Naive thymus-derived CD4-positive, alpha-beta T cell (primary cell): ENCODE measurements at regions of chr7 and their contacts with region 1.

Region 1: DNA sequence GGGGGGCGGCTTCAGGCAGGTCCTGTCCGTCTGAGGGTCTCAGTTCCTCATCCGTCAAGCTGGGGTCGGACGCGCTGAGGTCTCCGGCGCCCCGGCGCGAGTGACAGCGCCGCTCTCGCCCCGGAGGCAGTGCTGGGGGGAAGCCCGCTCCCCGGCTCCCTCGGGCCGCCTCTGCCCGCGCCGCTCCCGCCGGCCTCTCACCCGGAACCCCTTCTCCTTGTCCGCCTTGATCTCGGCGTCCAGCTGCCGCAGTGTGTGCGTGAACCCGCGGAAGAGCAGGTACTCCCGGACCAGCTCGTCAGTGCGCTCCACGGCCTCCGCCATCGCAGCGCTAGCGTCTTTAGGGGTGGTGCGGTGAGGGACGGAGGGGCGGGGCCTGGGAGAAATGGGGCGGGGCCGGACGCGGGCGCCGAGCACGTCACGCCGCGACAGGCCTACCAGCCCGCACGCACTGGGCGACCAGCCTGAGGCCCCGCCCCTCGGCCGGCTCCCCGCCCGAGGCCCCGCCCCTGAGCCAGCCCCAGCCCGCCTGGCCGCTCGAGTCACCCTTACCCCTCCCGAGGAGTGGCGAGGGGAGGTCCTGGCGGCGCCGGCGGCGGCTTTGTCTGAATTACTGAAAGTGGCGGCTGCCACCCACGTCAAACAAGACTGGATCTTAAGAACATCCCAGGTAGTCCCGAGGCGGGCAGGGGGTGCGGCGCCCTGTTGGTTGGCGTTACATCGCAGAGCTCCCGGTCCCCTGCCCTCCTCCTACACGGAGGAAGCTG is at the start of gene WDR91:
- DNase-seq: peak; percentile 83 to 94 (median 90)
- ATAC-seq: peak; percentile 97
- H3K4me3 ChIP-seq: peak within 1 kb of the TSS; percentile 68
- H3K4me3 Mint-ChIP-seq: peak within 1 kb of the TSS; percentile 91 to 99 (median 96)
- H3K27ac ChIP-seq: peak within 1 kb of the TSS; percentile 92
- H3K27ac Mint-ChIP-seq: peak within 1 kb of the TSS; percentile 94 to 99 (median 98)
- H3K4me1 ChIP-seq: peaks cover 0 to 5% of the 10 kb centered on the region in 2 donors
- H3K4me1 Mint-ChIP-seq: peaks cover 18 to 47% (median 37%) of the 10 kb centered on the region in 7 donors
- H3K27me3 ChIP-seq: no peaks in the 10 kb centered on the region
- H3K27me3 Mint-ChIP-seq: peaks cover 0 to 2% (median 0%) of the 10 kb centered on the region in 5 donors
- total RNA-seq, gene WDR91: 18.2 to 59.2 (median 37.0) TPM

Region 2: DNA sequence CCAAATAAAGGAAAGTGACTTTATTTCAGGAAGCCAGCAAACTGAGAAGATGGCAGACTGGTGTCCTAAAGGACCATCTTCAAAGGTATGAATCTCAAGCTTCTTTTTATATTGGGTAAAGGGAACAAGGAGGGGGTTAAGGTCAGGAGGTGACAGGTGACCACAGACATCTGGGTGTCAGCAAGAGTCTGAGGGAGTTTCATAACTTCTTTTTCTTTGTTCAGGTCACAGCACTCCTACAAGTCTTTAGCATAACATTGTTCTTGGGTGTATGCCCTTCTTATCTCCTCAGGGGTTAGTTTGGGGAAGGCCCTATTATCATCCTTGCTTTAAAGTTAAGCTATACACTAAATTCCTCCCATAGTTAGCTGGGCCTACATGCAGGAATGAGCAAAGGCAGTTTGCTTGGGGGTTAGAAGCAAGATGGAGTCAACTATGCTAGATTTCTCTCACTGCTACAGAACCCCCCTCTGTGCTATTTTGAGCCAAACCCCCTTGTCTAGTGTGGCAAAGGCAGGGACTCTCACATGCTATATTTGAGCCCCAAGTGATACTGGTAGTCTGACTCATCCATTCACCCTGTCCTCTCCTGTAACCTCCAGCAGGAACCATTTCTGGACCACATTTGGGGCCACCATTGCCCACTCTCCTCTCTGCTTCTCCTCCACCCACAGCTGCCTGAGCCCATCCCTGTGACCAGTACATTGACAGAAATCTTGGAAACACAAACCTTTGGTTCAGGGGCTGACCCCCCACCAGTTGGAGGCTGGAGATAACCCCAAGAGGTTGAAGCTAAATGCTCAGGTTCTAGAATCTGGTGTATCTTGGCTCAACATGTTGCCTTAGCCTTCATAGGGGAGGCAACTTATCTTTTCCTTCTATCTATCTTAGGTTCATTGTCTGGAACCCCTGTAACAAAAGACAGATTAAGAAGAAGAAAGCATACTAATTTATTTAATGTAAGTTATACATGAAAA is 1139.7 kb before region 1 on chr7:
- CTCF ChIA-PET with region 1: no interaction called
- POLR2A ChIA-PET with region 1: no interaction called
- intact Hi-C with region 1: no loop called
- DNase-seq: no peak
- ATAC-seq: no peak
- H3K4me3 ChIP-seq: no peak overlapping the region
- H3K4me3 Mint-ChIP-seq: no peak overlapping the region
- H3K27ac ChIP-seq: no peak overlapping the region
- H3K27ac Mint-ChIP-seq: no peak overlapping the region
- H3K4me1 ChIP-seq: no peaks in the 10 kb centered on the region
- H3K4me1 Mint-ChIP-seq: no peaks in the 10 kb centered on the region
- H3K27me3 ChIP-seq: no peaks in the 10 kb centered on the region
- H3K27me3 Mint-ChIP-seq: no peaks in the 10 kb centered on the region

Region 3: GRCh38 chr7:134316539-134317344 is 894.6 kb before region 1 on chr7 and contains the start of gene SLC35B4:
- CTCF ChIA-PET with region 1: no interaction called
- POLR2A ChIA-PET with region 1: no interaction called
- intact Hi-C with region 1: loop called (anchors 2 to 5 kb)
- DNase-seq: peak; percentile 79 to 95 (median 92)
- ATAC-seq: peak; percentile 99
- H3K4me3 ChIP-seq: peak within 1 kb of the TSS; percentile 79
- H3K4me3 Mint-ChIP-seq: peak within 1 kb of the TSS; percentile 88 to 97 (median 94)
- H3K27ac ChIP-seq: peak within 1 kb of the TSS; percentile 77
- H3K27ac Mint-ChIP-seq: peak within 1 kb of the TSS; percentile 81 to 93 (median 89)
- H3K4me1 ChIP-seq: peaks cover 0 to 15% of the 10 kb centered on the region in 2 donors
- H3K4me1 Mint-ChIP-seq: peaks cover 18 to 29% (median 26%) of the 10 kb centered on the region in 7 donors
- H3K27me3 ChIP-seq: no peaks in the 10 kb centered on the region
- H3K27me3 Mint-ChIP-seq: peaks cover 0 to 4% (median 0%) of the 10 kb centered on the region in 5 donors
- total RNA-seq, gene SLC35B4: 9.8 to 19.2 (median 12.2) TPM

Region 4: DNA sequence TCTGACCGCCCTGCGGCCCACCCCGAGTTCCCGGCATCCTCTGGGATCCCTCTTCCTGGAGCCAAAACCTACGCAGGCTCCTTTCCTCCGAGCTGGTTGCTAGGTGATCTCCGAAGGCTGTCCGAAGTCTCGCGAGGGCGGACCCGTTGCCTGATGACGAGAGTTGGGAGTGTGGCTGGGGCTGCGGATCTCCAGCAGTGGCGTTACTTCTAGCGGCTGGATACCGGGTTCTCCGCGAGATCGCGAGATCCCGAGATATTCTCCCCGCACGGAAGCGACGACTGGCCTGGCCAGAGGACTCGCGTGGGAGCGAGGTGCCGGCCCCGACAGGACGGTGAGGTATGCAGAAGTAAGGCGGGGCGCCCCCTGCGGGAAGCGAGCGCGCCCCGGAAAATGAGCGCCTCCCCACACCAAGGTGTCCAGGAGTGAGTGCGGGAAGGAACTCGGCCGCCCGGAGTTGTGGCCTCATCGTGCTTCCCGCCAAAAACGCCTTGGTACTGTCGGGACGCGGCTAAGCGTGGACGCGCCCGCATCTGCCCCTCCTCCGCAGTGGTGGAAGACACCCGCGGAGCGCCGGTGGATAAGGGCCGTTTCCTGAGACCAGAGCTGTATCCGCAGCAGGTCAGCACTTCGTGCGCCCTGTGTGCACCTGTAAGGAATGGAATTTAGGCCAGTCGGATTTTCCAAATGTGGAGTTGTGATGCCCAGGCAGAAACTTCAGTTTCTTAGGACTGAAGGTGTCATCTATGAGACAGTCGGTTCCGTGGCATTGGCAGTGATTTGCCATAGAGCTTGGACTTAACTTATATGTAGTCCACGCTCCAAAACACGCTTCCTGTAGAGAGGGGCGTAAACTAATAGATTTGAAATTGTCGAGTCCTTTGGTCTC is 224.8 kb before region 1 on chr7 and contains the start of gene AGBL3:
- CTCF ChIA-PET with region 1: no interaction called
- POLR2A ChIA-PET with region 1: interaction called, 15 read pairs
- intact Hi-C with region 1: loop called (anchors 1 kb)
- DNase-seq: peak; percentile 80 to 92 (median 89)
- ATAC-seq: peak; percentile 94
- H3K4me3 ChIP-seq: peak within 1 kb of the TSS; percentile 92
- H3K4me3 Mint-ChIP-seq: peak within 1 kb of the TSS; percentile 93 to 100 (median 98)
- H3K27ac ChIP-seq: peak within 1 kb of the TSS; percentile 96
- H3K27ac Mint-ChIP-seq: peak within 1 kb of the TSS; percentile 97 to 100 (median 99)
- H3K4me1 ChIP-seq: no peaks in the 10 kb centered on the region
- H3K4me1 Mint-ChIP-seq: peaks cover 20 to 61% (median 52%) of the 10 kb centered on the region in 7 donors
- H3K27me3 ChIP-seq: no peaks in the 10 kb centered on the region
- H3K27me3 Mint-ChIP-seq: no peaks in the 10 kb centered on the region
- total RNA-seq, gene AGBL3: 2.1 to 6.6 (median 3.8) TPM

Region 5: DNA sequence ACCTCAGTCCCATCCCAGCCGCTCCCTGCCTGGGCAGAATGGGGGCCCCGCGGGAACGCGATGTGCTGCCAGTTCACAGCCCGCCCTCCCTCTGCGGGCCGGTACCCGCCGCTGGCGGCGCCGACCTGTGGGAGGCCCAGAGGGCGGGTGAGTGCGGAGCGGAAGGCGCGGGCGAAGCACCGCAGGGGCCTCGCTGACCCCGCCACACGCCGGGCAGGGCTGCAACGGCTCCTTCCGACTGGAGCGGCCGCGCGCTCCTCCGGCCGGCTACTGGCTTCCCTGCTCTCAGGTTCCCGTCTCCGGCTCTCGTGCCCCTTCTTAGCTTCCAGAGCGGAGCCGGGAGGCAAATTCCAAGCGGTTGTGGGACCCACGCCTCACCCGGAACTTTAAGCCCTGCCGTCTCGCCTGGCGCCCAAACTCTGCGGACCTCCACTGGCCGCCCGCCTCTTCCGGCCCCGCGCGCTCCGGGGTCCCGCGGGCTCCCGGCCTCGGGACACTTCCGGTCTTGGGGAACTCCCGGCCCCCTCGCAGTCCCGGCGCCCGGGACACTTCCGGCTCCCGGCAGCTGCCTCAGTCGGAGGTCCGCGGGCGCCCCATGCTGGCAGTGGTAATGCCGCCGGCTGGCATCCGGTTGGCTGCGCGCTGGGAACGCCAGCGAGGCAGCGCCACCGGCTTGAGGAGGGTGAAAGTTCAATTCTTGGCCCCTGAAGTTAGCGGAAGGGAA is 40.9 kb before region 1 on chr7 and contains the start of gene CYREN:
- CTCF ChIA-PET with region 1: no interaction called
- POLR2A ChIA-PET with region 1: interaction called, 12 read pairs
- intact Hi-C with region 1: loop called (anchors 1 kb)
- DNase-seq: peak; percentile 74 to 91 (median 82)
- ATAC-seq: peak; percentile 85
- H3K4me3 ChIP-seq: peak within 1 kb of the TSS; percentile 84
- H3K4me3 Mint-ChIP-seq: peak within 1 kb of the TSS; percentile 84 to 96 (median 90)
- H3K27ac ChIP-seq: peak within 1 kb of the TSS; percentile 95
- H3K27ac Mint-ChIP-seq: peak within 1 kb of the TSS; percentile 94 to 98 (median 95)
- H3K4me1 ChIP-seq: peaks cover 16 to 29% of the 10 kb centered on the region in 2 donors
- H3K4me1 Mint-ChIP-seq: peaks cover 31 to 59% (median 47%) of the 10 kb centered on the region in 7 donors
- H3K27me3 ChIP-seq: no peaks in the 10 kb centered on the region
- H3K27me3 Mint-ChIP-seq: no peaks in the 10 kb centered on the region
- total RNA-seq, gene CYREN: 25.6 to 50.7 (median 32.0) TPM

Region 6: DNA sequence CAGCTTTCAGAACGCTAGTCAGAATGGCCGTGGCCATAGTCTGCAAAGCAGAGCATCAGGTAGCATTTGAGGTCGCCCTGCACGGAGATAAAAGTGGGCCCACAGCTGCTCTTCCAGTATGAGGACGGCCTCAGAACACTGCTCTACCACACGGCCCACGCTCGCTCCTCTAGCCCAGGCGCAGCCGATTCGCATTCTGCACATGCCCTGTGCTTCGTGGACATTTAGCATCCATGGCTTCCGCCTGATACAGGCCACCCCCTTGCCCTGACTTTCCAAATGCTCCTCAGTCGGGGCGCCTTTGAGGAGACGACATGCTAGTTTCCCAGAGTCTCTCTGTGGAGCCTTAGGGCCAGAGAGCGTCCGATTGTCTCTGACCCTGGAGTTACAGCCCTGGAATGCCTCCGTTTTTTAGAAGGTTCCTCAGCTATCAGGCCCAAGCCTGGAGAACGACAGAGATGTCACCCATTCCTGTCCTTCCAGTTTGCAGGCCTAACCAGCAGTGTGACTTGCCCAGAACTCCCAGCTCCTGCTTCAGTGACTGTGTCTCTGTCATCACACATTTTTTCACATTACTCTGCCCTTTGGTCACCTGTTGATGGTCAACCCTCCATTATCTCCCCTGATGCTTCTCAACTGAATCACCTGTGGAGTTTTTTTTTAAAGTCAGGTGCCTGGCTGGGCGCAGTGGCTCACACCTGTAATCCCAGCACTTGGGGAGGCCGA is 36.5 kb after region 1 on chr7:
- CTCF ChIA-PET with region 1: no interaction called
- POLR2A ChIA-PET with region 1: no interaction called
- intact Hi-C with region 1: no loop called
- DNase-seq: no peak
- ATAC-seq: no peak
- H3K4me3 ChIP-seq: no peak overlapping the region
- H3K4me3 Mint-ChIP-seq: no peak overlapping the region
- H3K27ac ChIP-seq: no peak overlapping the region
- H3K27ac Mint-ChIP-seq: no peak overlapping the region
- H3K4me1 ChIP-seq: no peaks in the 10 kb centered on the region
- H3K4me1 Mint-ChIP-seq: peaks cover 0 to 5% (median 4%) of the 10 kb centered on the region in 7 donors
- H3K27me3 ChIP-seq: no peaks in the 10 kb centered on the region
- H3K27me3 Mint-ChIP-seq: peaks cover 0 to 9% (median 0%) of the 10 kb centered on the region in 5 donors

Region 7: GRCh38 chr7:135260930-135261721 is 49.8 kb after region 1 on chr7:
- CTCF ChIA-PET with region 1: no interaction called
- POLR2A ChIA-PET with region 1: no interaction called
- intact Hi-C with region 1: no loop called
- DNase-seq: no peak
- ATAC-seq: no peak
- H3K4me3 ChIP-seq: no peak overlapping the region
- H3K4me3 Mint-ChIP-seq: no peak overlapping the region
- H3K27ac ChIP-seq: no peak overlapping the region
- H3K27ac Mint-ChIP-seq: no peak overlapping the region
- H3K4me1 ChIP-seq: no peaks in the 10 kb centered on the region
- H3K4me1 Mint-ChIP-seq: peaks cover 0 to 1% (median 0%) of the 10 kb centered on the region in 7 donors
- H3K27me3 ChIP-seq: no peaks in the 10 kb centered on the region
- H3K27me3 Mint-ChIP-seq: peaks cover 0 to 3% (median 0%) of the 10 kb centered on the region in 5 donors

Region 8: DNA sequence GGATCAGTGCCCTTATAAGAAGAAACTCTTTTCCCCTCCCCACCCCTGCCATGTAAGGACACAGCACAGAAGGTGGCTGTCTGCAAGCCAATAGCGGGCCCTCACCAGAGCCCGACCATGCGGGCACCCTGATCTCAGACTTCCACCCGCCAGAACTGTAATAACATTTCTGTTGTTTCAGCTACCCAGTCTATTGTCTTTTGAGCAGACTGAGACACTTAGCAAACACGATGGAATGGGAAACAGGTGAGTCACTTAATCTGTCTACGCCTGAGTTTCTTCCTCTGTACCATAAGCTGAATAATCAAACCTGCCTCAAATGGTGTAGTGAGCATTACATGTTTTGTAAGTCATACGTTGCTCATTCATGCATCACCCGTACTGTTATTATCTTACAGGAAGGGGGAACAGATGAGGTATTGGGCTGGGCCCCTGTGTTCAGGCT is 80.5 kb after region 1 on chr7:
- CTCF ChIA-PET with region 1: no interaction called
- POLR2A ChIA-PET with region 1: no interaction called
- intact Hi-C with region 1: no loop called
- DNase-seq: no peak
- ATAC-seq: no peak
- H3K4me3 ChIP-seq: no peak overlapping the region
- H3K4me3 Mint-ChIP-seq: no peak overlapping the region
- H3K27ac ChIP-seq: no peak overlapping the region
- H3K27ac Mint-ChIP-seq: no peak overlapping the region
- H3K4me1 ChIP-seq: no peaks in the 10 kb centered on the region
- H3K4me1 Mint-ChIP-seq: no peaks in the 10 kb centered on the region
- H3K27me3 ChIP-seq: no peaks in the 10 kb centered on the region
- H3K27me3 Mint-ChIP-seq: peaks cover 0 to 16% (median 4%) of the 10 kb centered on the region in 5 donors

Region 9: GRCh38 chr7:135558337-135558767 is 347.0 kb after region 1 on chr7:
- CTCF ChIA-PET with region 1: no interaction called
- POLR2A ChIA-PET with region 1: interaction called, 3 read pairs
- intact Hi-C with region 1: loop called (anchors 1 kb)
- DNase-seq: peak; percentile 36 to 71 (median 66)
- ATAC-seq: peak; percentile 78
- H3K4me3 ChIP-seq: peak overlapping the region; percentile 89
- H3K4me3 Mint-ChIP-seq: no peak overlapping the region
- H3K27ac ChIP-seq: peak overlapping the region; percentile 92
- H3K27ac Mint-ChIP-seq: no peak overlapping the region
- H3K4me1 ChIP-seq: peaks cover 6% of the 10 kb centered on the region in 2 donors
- H3K4me1 Mint-ChIP-seq: peaks cover 10 to 35% (median 25%) of the 10 kb centered on the region in 7 donors
- H3K27me3 ChIP-seq: no peaks in the 10 kb centered on the region
- H3K27me3 Mint-ChIP-seq: peaks cover 0 to 6% (median 0%) of the 10 kb centered on the region in 5 donors